ENCODE measurements at regions of chr20 and their contacts with region 1.

Region 1: GRCh38 chr20:31661625-31662371 is 24.1 kb downstream of the COX4I2 start:
- DNase-seq: peak; percentile 75
- H3K4me3 ChIP-seq: peak overlapping the region in 1 of 2 donors; percentile 19
- H3K27ac ChIP-seq: peak overlapping the region; percentile 67 to 72
- H3K4me1 ChIP-seq: peaks cover 30% of the 10 kb centered on the region
- H3K27me3 ChIP-seq: no peaks in the 10 kb centered on the region
- CTCF ChIP-seq: peak; percentile 70 to 97 (median 83)
- POLR2A ChIP-seq: peak; percentile 44

Region 2: GRCh38 chr20:31723319-31724078 is 61.7 kb after region 1 on chr20:
- intact Hi-C with region 1: loop called (anchors 1 kb)
- DNase-seq: peak; percentile 98
- H3K4me3 ChIP-seq: peak overlapping the region; percentile 90 to 91
- H3K27ac ChIP-seq: peak overlapping the region; percentile 96 to 100
- H3K4me1 ChIP-seq: peaks cover 2% of the 10 kb centered on the region
- H3K27me3 ChIP-seq: no peaks in the 10 kb centered on the region
- CTCF ChIP-seq: peak; percentile 95 to 100 (median 99)
- POLR2A ChIP-seq: peak; percentile 56

Measured in prostate gland (tissue), 2 donors.